Dorsolateral prefrontal cortex (tissue), 120 donors: ENCODE measurements at regions of chr17 and their contacts with region 1.

Region 1: GRCh38 chr17:18260332-18261144 is at the start of gene MIEF2:
- DNase-seq: peak; percentile 91 to 98 (median 97)
- H3K4me3 ChIP-seq: peak within 1 kb of the TSS; percentile 70 to 99 (median 94)
- H3K27ac ChIP-seq: peak within 1 kb of the TSS in 57 of 59 donors; percentile 52 to 96 (median 84)
- H3K27me3 ChIP-seq: no peaks in the 10 kb centered on the region
- CTCF ChIP-seq: peak in 14 of 56 donors; percentile 5 to 43 (median 22)
- total RNA-seq, gene MIEF2: 12.6 to 31.3 (median 19.8) TPM

Region 2: DNA sequence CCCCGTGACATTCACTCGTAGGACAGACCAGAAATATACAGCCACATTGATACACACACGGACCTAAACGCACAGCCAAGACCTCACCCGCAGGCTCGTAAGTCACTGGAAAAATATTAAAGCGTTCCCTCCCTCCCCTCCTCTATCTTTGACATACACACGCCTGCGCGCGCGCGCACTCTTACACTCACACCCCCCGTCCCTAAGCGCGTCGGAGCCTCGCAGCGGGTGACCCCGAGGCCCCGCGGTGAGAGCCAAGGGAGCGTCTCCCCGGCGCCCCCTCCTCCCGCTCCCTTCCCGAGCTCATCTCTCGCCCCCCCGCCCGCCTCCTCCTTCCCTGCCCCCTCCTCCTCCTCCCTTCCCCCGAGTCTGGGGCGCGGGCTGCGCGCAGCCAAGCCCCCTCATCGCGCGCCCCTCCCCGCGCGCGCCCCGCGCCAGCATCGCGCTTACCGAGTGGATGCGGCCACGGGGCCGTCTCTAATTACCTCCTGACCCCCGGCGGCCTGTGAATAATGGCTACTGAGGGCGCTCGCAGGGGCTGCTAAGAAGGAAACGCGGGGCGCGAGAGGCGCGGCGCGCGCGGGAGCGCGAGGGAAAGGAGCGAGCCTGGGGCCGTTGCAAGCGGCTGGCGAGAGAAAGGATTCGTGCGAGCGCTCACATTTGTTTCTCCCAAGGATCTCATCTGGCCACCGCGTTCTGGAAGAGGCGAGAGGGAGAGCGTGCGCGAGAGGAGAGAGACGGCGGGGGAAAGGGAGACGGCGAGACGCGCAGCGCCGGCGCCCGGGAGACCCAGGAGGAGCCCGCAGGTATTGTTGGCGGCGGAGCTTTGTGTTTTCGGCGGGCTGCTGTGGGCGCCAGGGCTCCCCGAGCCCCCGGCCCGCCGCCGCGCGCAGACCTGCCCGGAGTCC is 536.9 kb before region 1 on chr17:
- intact Hi-C with region 1: no loop called
- DNase-seq: peak in 4 of 10 donors; percentile 50 to 62 (median 58)
- H3K4me3 ChIP-seq: peak overlapping the region; percentile 50 to 81 (median 72)
- H3K27ac ChIP-seq: peak overlapping the region in 54 of 59 donors; percentile 17 to 93 (median 78)
- H3K27me3 ChIP-seq: no peaks in the 10 kb centered on the region
- CTCF ChIP-seq: no peak

Region 3: DNA sequence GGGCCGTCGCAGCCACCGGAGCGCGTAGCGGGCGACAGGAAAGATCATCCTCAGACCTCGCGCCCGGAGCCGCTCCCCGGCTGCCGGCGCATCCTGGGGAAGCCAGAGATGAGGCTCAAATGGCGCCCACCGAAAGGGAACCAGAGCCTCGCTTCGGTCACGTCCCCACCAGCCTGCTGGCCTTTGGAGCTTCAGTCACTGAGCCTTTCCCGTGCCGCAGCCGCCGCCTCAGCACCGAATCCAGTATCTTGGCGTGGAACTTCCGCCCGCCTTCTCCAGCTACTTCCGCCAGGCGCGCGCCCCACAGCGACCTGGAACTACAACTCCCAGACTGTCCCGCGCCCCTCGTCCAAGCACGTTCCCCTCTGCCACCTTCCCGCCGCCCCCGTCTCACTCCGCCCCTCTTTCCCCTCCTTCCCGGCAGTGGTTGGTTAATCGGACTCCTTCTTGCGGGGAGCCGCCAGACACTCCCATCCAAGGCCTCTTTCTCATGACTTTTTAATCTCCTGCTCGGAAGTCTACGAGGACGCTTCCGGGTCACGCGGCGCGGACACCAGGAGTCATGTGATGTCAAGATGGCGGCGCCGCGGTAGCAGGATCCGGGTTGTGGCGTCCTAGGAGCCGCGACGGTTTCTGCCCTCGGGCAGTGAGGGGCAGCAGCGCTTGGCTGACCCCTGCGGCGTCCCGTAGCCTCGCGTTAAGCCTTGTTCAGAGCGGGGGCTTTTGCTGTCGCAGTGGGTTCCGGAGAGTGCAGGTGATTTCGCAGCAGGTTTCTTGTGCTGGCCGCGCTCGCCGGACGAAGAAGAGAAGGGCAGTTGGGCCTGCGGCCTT is 54.4 kb after region 1 on chr17 and contains the starts of genes SMCR8 and TOP3A:
- intact Hi-C with region 1: loop called (anchors 2 kb)
- DNase-seq: peak; percentile 94 to 98 (median 97)
- H3K4me3 ChIP-seq: peak within 1 kb of the TSS; percentile 59 to 100 (median 94)
- H3K27ac ChIP-seq: peak within 1 kb of the TSS; percentile 27 to 98 (median 91)
- H3K27me3 ChIP-seq: no peaks in the 10 kb centered on the region
- CTCF ChIP-seq: peak in 35 of 56 donors; percentile 3 to 59 (median 26)
- total RNA-seq, gene SMCR8: 13.6 to 22.3 (median 18.4) TPM
- total RNA-seq, gene TOP3A: 30.1 to 65.0 (median 46.2) TPM